CD4-positive, alpha-beta memory T cell (primary cell): ENCODE measurements at regions of chr21 and their contacts with region 1.

Region 1: DNA sequence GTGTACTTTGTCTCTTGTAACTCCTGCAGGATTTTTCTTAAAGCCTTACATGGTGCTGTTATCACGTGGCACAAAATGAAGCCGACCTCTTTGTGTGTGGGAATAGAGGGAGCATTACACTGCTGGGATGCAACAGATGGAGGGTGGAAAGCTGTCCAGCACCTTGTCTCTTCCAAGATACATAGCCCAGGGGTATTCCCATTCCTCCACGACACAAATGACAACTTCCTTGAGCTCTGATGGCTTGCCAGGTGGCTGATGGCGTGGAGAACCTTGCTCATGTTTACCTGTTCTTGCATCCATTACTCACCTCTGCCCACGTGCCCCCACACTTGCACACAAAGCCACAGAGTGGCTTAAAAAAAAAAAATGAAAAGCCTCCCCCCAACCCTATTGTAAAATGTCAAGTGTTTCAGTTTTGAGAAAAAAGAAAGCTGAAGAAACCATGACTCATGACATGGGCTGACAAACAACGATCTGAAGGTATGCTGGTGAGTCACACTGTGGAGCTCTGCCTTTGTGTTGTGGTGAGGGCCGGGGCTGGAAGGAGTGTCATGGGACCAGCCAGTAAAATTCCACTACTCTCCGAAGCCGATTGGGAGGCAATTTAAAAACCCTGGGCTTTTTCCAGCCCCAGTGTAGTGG is 32.0 kb upstream of the ATP5PO start:
- DNase-seq: peak; percentile 86 to 97 (median 91)
- H3K4me3 ChIP-seq: peak overlapping the region; percentile 21 to 36
- H3K4me3 Mint-ChIP-seq: peak overlapping the region; percentile 49 to 94 (median 85)
- H3K27ac ChIP-seq: peak overlapping the region; percentile 94
- H3K27ac Mint-ChIP-seq: peak overlapping the region; percentile 92 to 99 (median 98)
- H3K4me1 ChIP-seq: peaks cover 79% of the 10 kb centered on the region
- H3K4me1 Mint-ChIP-seq: peaks cover 58 to 90% (median 68%) of the 10 kb centered on the region in 4 donors
- H3K27me3 ChIP-seq: no peaks in the 10 kb centered on the region
- H3K27me3 Mint-ChIP-seq: no peaks in the 10 kb centered on the region

Region 2: GRCh38 chr21:33931799-33932390 is 15.7 kb before region 1 on chr21:
- CTCF ChIA-PET with region 1: interaction called, 80 read pairs
- POLR2A ChIA-PET with region 1: interaction called, 938 read pairs
- intact Hi-C with region 1: loop called (anchors 1 kb)
- DNase-seq: no peak
- H3K4me3 ChIP-seq: peak overlapping the region; percentile 63 to 69
- H3K4me3 Mint-ChIP-seq: peak overlapping the region; percentile 94 to 99 (median 99)
- H3K27ac ChIP-seq: peak overlapping the region; percentile 88
- H3K27ac Mint-ChIP-seq: peak overlapping the region; percentile 95 to 100 (median 99)
- H3K4me1 ChIP-seq: peaks cover 49% of the 10 kb centered on the region
- H3K4me1 Mint-ChIP-seq: peaks cover 24 to 54% (median 36%) of the 10 kb centered on the region in 4 donors
- H3K27me3 ChIP-seq: no peaks in the 10 kb centered on the region
- H3K27me3 Mint-ChIP-seq: no peaks in the 10 kb centered on the region

Region 3: DNA sequence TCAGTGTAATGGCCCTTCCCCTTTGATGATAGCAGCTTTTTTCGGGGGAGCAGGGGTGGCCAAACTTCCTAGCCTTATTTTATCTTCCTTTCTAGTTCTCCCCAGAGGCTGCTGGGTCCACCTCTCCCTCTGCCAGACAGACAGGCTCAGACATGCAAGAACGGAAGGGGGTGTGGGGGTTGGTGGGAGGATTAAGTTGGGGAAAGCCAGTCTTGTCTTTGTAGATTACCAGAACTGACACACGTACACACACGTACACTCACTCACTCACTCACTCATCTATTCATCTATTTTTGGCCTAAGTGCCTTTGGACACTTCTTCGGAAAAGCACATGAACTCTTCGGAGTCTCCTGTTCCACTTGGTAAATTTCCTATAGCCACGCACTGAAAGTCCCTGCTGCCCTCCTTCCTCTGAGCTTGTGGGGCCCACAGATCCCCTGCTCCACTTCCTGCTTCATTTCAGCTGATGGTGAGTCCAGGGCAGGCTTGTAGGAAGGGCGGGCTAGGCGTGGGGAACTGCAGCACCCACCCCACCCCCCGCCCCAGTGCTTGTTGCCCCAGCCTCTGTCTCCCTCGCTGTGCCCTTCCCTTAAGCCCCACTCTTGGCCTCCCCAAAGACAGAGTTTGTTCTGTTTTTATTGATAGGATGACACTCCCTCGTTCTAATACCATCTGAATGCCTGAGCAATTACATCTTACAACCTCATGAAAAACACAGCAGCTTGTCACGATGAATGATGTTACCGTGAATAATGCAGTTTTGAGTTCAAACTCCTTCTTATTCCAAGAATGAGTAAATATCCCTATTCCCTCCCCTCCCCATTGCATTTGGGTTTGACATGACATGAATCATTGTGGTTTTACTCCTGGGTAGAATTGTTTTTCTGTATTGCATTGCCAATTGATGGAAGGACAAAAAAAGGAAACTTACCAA is 28.8 kb after region 1 on chr21:
- CTCF ChIA-PET with region 1: interaction called, 7 read pairs
- POLR2A ChIA-PET with region 1: interaction called, 230 read pairs
- intact Hi-C with region 1: loop called (anchors 1 kb)
- DNase-seq: peak; percentile 21 to 80 (median 29)
- H3K4me3 ChIP-seq: peak overlapping the region; percentile 0 to 7
- H3K4me3 Mint-ChIP-seq: peak overlapping the region; percentile 41 to 83 (median 66)
- H3K27ac ChIP-seq: peak overlapping the region; percentile 58
- H3K27ac Mint-ChIP-seq: peak overlapping the region; percentile 67 to 98 (median 94)
- H3K4me1 ChIP-seq: peaks cover 33% of the 10 kb centered on the region
- H3K4me1 Mint-ChIP-seq: peaks cover 37 to 58% (median 48%) of the 10 kb centered on the region in 4 donors
- H3K27me3 ChIP-seq: no peaks in the 10 kb centered on the region
- H3K27me3 Mint-ChIP-seq: no peaks in the 10 kb centered on the region

Region 4: GRCh38 chr21:34073032-34073869 is 125.7 kb after region 1 on chr21 and contains the starts of genes MRPS6 and SLC5A3:
- CTCF ChIA-PET with region 1: interaction called, 11 read pairs
- POLR2A ChIA-PET with region 1: interaction called, 168 read pairs
- intact Hi-C with region 1: loop called (anchors 1 kb)
- DNase-seq: peak; percentile 68 to 78 (median 69)
- H3K4me3 ChIP-seq: peak within 1 kb of the TSS; percentile 37 to 66
- H3K4me3 Mint-ChIP-seq: peak within 1 kb of the TSS; percentile 89 to 97 (median 94)
- H3K27ac ChIP-seq: peak within 1 kb of the TSS; percentile 68
- H3K27ac Mint-ChIP-seq: peak within 1 kb of the TSS; percentile 91 to 97 (median 93)
- H3K4me1 ChIP-seq: peaks cover 39% of the 10 kb centered on the region
- H3K4me1 Mint-ChIP-seq: peaks cover 36 to 54% (median 45%) of the 10 kb centered on the region in 4 donors
- H3K27me3 ChIP-seq: no peaks in the 10 kb centered on the region
- H3K27me3 Mint-ChIP-seq: no peaks in the 10 kb centered on the region
- total RNA-seq, gene MRPS6: 76.9 to 80.1 TPM
- total RNA-seq, gene SLC5A3: 32.8 to 33.4 TPM

Region 5: DNA sequence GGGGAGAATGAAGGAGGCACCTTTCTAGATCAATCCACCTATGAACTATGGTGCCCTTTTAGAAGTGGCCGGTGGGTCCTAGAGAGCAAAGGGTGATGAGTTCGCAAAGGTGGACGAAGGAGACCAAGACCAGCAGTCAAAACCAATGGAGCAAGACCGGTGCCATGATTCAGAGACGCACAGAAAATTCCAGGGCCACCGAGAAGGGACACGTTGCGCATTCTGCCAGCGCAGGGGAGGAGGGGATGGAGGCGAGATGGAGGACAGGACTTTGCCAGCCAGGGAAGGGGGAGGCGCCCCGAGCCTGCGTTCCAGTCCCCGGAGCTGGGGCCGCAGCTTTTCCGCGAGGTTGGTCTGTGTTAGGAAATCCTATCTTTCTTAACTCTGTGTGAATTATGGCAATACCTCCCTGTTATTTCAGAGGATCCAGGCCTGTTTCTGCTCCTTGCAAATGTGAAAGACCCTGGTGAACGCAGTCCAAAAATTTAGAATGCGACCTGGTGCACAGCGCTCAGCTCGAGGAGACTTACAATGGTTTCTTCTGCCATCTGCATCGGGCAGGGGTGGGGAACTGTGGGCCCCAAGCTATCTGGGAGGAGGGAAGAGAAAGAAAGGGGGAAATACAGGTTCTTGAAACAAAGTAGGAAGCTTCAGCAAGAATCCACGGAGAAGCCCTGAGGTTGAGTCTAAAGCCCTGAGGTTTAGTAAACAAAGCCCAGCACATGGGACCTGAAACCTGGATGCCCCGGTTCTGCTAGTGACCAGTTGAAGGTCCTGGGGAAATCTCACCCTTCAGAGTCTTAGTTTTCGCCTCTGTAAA is 255.2 kb after region 1 on chr21:
- CTCF ChIA-PET with region 1: no interaction called
- POLR2A ChIA-PET with region 1: interaction called, 17 read pairs
- intact Hi-C with region 1: no loop called
- DNase-seq: no peak
- H3K4me3 ChIP-seq: no peak overlapping the region
- H3K4me3 Mint-ChIP-seq: peak overlapping the region; percentile 46 to 87 (median 80)
- H3K27ac ChIP-seq: no peak overlapping the region
- H3K27ac Mint-ChIP-seq: peak overlapping the region in 2 of 7 donors; percentile 31 to 52
- H3K4me1 ChIP-seq: peaks cover 32% of the 10 kb centered on the region
- H3K4me1 Mint-ChIP-seq: peaks cover 32 to 50% (median 36%) of the 10 kb centered on the region in 4 donors
- H3K27me3 ChIP-seq: no peaks in the 10 kb centered on the region
- H3K27me3 Mint-ChIP-seq: no peaks in the 10 kb centered on the region